Endothelial cell of umbilical vein (primary cell): ENCODE measurements at regions of chr20 and their contacts with region 1.

Region 1: DNA sequence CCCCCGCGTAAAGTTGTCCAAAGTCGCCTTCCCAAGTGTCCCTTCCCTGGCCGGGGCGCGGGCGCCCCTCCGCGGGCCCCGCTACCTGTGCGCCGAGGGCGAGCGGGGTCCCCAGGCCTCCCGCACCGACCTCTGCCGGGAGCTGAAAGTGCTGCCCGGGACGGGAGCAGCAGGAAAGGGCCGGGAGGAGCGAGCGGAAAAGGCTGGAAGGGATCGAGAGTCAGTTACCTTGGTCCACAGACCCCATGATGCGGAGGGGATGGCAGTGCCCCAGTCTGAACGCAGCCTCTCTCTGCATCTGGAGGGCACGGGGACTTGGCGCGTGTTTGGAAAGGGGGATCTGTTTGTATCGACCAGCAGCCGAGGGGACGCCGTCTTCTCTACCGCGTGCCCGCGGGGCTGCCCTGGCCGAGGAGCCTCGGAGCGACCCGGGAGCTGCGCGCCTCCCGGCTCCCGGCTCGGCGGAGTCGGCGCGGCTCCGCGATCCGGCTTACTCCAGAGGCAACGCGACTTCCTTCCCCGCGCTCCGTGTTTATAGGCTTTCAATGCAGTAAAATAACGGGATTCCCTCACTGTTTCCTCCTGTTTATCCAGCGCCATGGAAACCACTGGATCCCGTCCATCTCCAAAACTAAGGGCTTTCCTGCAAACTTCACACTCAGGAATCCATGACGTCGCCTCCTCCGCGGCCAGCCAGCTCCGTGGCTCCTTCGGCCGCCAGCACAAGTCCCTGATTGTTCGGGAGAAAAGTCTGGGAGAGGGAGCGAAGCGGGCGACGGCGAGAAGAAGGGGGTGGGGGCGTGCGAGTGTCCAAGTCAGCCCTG is 20.0 kb upstream of the NFATC2 start:
- DNase-seq: peak; percentile 98
- H3K4me3 ChIP-seq: peak overlapping the region; percentile 40 to 62 (median 54)
- H3K27ac ChIP-seq: peak overlapping the region; percentile 64
- H3K4me1 ChIP-seq: peaks cover 24% of the 10 kb centered on the region
- H3K27me3 ChIP-seq: peaks cover 1 to 2% of the 10 kb centered on the region in 2 experiments
- CTCF ChIP-seq: peak; percentile 12
- POLR2A ChIP-seq: no peak

Region 2: DNA sequence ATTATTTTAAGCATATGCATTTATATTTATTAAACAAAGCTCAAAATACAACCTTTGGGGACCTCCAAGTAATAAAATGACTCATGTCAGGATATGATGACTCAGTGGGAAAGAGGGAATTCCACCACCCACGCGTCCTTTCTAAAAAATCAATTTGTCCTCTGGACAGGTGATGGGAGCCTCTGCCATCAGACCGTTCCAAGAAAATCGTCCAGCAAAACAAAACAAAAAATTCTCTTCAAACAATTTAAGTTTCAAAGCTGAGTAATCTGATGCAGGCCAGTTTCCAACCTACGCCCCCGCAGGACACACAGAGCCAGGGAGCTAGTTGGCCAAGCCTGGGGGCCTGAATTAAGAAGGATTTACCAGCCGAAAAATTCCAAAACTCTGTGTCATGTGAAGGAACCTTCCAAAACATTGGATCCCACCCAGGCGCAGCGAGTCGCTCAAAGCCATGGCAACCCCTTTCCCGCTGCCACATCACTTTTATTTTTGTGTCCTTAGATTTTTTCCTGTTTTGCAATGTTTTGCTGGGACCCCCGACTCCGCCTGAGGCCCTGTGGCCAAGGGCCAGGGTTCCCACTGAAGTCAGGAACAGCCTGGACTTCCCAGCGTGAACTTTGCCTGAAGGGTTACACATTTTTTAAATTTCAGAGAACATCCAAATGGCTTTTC is 115.3 kb before region 1 on chr20:
- CTCF ChIA-PET with region 1: no interaction called
- POLR2A ChIA-PET with region 1: no interaction called
- dilution Hi-C with region 1: no loop called
- intact Hi-C with region 1: loop called (anchors 1 kb)
- DNase-seq: peak; percentile 95
- H3K4me3 ChIP-seq: peak overlapping the region in 1 of 3 experiments; percentile 3
- H3K27ac ChIP-seq: peak overlapping the region; percentile 83
- H3K4me1 ChIP-seq: peaks cover 20% of the 10 kb centered on the region
- H3K27me3 ChIP-seq: no peaks in the 10 kb centered on the region
- CTCF ChIP-seq: no peak
- POLR2A ChIP-seq: no peak

Region 3: DNA sequence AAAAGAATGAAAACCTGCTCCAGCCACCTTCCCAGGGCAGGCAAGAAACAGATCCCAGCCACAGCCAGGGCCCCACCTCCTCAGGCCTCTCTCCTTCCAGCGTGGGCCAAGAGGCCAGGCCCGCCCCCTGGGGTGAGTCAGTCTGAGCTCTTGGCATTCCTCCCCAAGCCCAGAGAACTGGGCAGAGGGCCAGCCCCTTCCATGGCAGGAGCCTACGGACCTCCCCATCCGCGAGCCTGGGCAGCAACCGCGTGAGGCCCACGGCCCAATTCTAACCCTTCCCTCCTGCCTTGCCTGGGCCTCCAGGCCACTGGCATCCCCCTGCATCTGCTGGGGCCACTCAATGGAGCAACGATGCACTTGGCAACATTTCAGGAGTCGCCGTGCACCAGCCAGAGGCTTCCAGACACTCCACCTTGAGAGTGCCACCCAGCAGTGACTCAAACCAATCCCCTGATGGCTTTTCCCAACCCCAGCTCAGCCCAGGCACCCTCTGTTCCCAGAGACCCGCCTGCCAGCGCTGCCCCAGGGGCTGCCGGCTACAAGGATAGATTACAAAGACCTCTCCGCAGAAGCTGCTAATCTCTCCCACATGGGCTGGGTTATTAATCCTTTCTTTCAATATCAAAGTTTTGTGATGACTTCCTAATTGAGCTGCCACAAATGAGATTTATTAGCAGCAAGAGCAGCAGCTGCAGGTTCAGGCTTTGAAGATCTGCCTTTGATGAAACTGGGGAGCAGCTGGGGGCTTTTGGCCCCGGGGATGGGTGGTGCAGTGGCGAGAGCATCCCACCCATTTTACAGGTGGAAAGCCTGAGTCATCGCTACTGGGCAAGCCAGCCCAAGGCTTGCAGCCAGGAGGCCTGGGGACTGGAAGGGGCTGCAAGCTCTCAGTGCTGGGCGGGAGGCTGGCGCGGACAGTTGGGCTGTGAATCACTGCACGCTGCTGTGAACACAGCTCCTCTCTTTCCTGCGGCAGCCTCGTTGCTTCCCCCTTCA is 105.7 kb before region 1 on chr20:
- CTCF ChIA-PET with region 1: interaction called, 13 read pairs
- POLR2A ChIA-PET with region 1: interaction called, 3 read pairs
- dilution Hi-C with region 1: no loop called
- intact Hi-C with region 1: loop called (anchors 2 kb)
- DNase-seq: peak; percentile 99
- H3K4me3 ChIP-seq: no peak overlapping the region
- H3K27ac ChIP-seq: peak overlapping the region; percentile 71
- H3K4me1 ChIP-seq: peaks cover 15% of the 10 kb centered on the region
- H3K27me3 ChIP-seq: no peaks in the 10 kb centered on the region
- CTCF ChIP-seq: no peak
- POLR2A ChIP-seq: no peak

Region 4: DNA sequence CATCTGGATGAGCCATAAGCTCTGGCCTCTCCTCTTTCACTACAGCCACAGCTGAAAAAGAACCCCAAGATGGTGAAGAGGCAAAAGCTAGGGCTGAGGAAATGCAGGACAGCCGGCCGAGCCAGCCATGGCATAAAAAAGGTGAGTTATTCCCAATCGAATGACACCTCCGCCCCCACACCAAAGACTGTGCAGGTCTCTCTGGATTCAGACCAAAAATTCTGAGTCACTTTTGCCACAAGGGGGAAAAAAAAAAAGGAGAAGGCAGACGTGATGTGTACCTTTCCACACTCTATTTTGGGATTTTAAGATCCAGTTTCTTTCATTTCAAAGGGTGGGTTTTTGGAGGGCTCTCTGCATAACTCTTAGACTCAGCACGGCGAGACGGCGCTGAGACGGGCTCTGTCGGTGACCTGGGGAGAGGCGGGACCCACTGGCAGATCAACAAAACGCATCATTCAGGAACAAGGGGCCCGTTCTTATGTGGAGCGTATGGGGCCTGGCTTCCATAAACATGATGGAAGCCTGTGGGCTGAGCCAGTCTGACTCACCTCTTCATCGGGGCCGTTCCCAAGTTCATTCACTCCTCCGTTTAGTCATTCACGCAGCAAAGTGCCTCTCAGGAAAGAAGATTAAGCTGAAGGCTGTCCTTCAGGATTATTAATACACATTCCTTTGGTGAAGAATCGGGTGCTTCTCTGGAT is 74.8 kb before region 1 on chr20:
- CTCF ChIA-PET with region 1: interaction called, 3 read pairs
- POLR2A ChIA-PET with region 1: no interaction called
- dilution Hi-C with region 1: no loop called
- intact Hi-C with region 1: loop called (anchors 2 kb)
- DNase-seq: peak; percentile 50
- H3K4me3 ChIP-seq: no peak overlapping the region
- H3K27ac ChIP-seq: peak overlapping the region; percentile 15
- H3K4me1 ChIP-seq: peaks cover 23% of the 10 kb centered on the region
- H3K27me3 ChIP-seq: no peaks in the 10 kb centered on the region
- CTCF ChIP-seq: no peak
- POLR2A ChIP-seq: no peak

Region 5: GRCh38 chr20:51541189-51542032 is 21.1 kb before region 1 on chr20:
- CTCF ChIA-PET with region 1: interaction called, 9 read pairs
- POLR2A ChIA-PET with region 1: no interaction called
- dilution Hi-C with region 1: no loop called
- intact Hi-C with region 1: loop called (anchors 1 kb)
- DNase-seq: peak; percentile 85
- H3K4me3 ChIP-seq: peak overlapping the region in 2 of 3 experiments; percentile 36 to 47
- H3K27ac ChIP-seq: peak overlapping the region; percentile 42
- H3K4me1 ChIP-seq: peaks cover 25% of the 10 kb centered on the region
- H3K27me3 ChIP-seq: no peaks in the 10 kb centered on the region
- CTCF ChIP-seq: no peak
- POLR2A ChIP-seq: no peak

Region 6: DNA sequence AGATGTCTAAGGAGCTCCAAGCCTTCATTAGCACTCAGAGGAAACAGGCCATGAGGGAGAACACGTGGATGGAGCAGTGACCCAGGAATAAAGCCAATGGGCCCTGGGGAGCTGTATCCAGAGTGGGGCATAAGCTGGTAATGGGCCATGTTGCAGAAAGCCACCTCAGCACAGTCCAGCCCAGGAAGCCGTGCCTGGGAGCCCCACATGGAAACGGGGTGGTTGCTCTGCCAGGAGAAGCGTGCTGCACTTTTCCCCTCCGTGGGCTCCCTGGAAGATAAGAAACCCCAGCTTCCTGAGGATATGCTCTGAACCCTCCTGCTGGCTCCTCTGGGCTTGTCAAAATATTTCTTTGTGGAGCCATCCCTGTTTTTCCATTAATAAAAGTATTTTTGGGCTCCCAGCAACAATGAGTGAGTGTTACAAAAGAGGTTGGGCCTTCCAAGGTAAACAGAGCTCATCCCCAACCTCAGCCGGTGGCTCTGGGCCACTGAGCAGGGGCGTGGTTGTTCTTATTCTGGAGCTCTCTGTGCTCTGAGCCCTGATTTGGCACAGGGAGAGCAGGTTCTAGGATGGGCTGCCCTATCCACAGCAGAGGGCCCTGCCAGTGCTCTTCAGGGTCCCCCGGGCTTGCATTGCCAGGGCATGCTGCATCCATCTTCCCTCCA is 11.2 kb after region 1 on chr20:
- CTCF ChIA-PET with region 1: interaction called, 11 read pairs
- POLR2A ChIA-PET with region 1: no interaction called
- dilution Hi-C with region 1: no loop called
- intact Hi-C with region 1: no loop called
- DNase-seq: peak; percentile 45
- H3K4me3 ChIP-seq: no peak overlapping the region
- H3K27ac ChIP-seq: no peak overlapping the region
- H3K4me1 ChIP-seq: peaks cover 13% of the 10 kb centered on the region
- H3K27me3 ChIP-seq: peaks cover 0 to 2% of the 10 kb centered on the region in 2 experiments
- CTCF ChIP-seq: no peak
- POLR2A ChIP-seq: no peak

Region 7: GRCh38 chr20:51616060-51616459 is 53.5 kb after region 1 on chr20:
- CTCF ChIA-PET with region 1: no interaction called
- POLR2A ChIA-PET with region 1: no interaction called
- dilution Hi-C with region 1: no loop called
- intact Hi-C with region 1: no loop called
- DNase-seq: no peak
- H3K4me3 ChIP-seq: no peak overlapping the region
- H3K27ac ChIP-seq: no peak overlapping the region
- H3K4me1 ChIP-seq: no peaks in the 10 kb centered on the region
- H3K27me3 ChIP-seq: no peaks in the 10 kb centered on the region
- CTCF ChIP-seq: no peak
- POLR2A ChIP-seq: no peak